IMR-90 (cell line): ENCODE measurements at regions of chr4 and their contacts with region 1.

Region 1: GRCh38 chr4:107349732-107350131 is 313.6 kb upstream of the DKK2 start:
- DNase-seq: no peak
- ATAC-seq: no peak
- H3K4me3 ChIP-seq: no peak overlapping the region
- H3K27ac ChIP-seq: no peak overlapping the region
- H3K4me1 ChIP-seq: no peaks in the 10 kb centered on the region
- H3K27me3 ChIP-seq: no peaks in the 10 kb centered on the region
- CTCF ChIP-seq: no peak
- POLR2A ChIP-seq: no peak
- RAD21 ChIP-seq: no peak

Region 2: DNA sequence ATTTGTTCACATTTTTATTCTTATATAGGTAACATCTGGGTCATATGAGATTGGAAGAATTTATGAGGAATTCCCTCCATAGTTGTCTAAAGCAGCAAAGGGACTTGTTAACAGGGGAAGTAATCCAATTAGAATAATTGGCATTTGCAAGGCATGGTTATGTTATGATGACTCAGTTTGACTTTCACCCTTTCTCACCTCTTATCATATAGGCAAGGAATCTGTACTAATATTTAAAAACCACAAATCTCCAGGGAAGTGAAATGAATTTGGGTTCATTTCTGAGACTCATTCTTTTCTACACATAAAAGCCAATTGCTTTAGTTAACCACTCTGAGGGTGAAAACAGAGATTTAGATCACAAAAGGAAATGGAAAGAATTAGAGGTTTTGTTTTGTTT is 32.1 kb before region 1 on chr4:
- CTCF ChIA-PET with region 1: no interaction called
- POLR2A ChIA-PET with region 1: no interaction called
- dilution Hi-C with region 1: no loop called
- in situ Hi-C with region 1: no loop called
- intact Hi-C with region 1: loop called (anchors 5 kb)
- DNase-seq: no peak
- ATAC-seq: no peak
- H3K4me3 ChIP-seq: no peak overlapping the region
- H3K27ac ChIP-seq: no peak overlapping the region
- H3K4me1 ChIP-seq: no peaks in the 10 kb centered on the region
- H3K27me3 ChIP-seq: 0 out of 2 replicates have a peak, but pooled peaks cover 3% of the 10 kb centered on the region
- CTCF ChIP-seq: no peak
- POLR2A ChIP-seq: no peak
- RAD21 ChIP-seq: no peak

Region 3: DNA sequence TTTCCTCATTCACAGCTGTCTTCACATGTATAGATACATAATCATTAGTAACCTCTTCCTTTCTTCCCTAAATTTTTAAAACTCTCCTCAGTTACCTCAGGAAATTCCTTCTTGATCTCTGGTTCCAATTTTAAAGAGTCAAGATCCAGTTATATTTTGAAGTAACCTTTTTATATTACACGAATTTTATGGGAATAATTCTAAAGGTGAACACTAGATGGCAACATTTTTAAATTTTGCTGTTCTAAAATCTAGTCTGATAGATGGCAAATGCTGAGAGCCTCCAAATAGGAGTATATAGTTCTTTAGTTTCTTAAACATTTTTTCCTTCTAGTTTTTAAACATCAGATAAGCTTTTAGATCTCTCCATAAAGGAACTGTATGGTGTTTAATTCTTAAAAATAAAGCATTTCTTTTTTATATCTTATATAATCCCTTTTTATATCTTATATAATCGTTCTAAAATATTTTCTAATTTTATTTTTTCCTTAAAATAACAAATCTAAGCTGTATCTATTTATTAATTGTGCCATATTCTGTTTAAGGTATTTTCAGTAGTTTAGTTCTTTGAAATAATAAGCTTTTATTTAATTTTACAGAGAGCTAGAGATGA is 408.2 kb after region 1 on chr4:
- CTCF ChIA-PET with region 1: no interaction called
- POLR2A ChIA-PET with region 1: no interaction called
- dilution Hi-C with region 1: no loop called
- in situ Hi-C with region 1: no loop called
- intact Hi-C with region 1: no loop called
- DNase-seq: peak; percentile 44
- ATAC-seq: peak; percentile 57; the same call in 1 of the 2 replicates
- H3K4me3 ChIP-seq: no peak overlapping the region
- H3K27ac ChIP-seq: no peak overlapping the region
- H3K4me1 ChIP-seq: no peaks in the 10 kb centered on the region
- H3K27me3 ChIP-seq: peaks cover 12% of the 10 kb centered on the region
- CTCF ChIP-seq: peak; percentile 52
- POLR2A ChIP-seq: no peak
- RAD21 ChIP-seq: peak; percentile 50